ENCODE measurements at regions of chr6 and their contacts with region 1.

Region 1: DNA sequence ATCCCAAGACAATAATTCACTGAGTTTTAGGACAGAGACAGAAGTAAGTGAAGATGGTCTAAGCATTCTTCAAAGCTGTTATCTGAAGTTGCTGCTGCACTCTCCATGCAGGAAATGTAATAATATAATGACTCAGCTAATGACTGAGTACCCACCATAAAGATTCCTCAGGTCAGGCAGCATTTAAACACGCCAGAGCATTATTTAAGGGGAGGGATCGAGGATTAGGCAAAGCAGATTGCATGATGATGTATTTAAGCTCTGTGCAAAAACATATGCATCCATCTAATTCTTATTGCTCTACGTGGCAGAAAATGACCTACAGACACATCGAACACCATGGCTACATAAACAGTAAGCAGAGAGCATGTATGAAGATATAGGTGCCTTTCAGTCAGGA is 216.4 kb downstream of the UNC5CL start:
- DNase-seq: no peak
- H3K4me3 ChIP-seq: no peak overlapping the region
- H3K27ac ChIP-seq: no peak overlapping the region
- H3K4me1 ChIP-seq: no peaks in the 10 kb centered on the region
- H3K27me3 ChIP-seq: peaks cover 0 to 3% of the 10 kb centered on the region in 2 experiments
- CTCF ChIP-seq: no peak
- POLR2A ChIP-seq: no peak

Region 2: GRCh38 chr6:40328405-40328987 is 494.1 kb before region 1 on chr6:
- CTCF ChIA-PET with region 1: no interaction called
- POLR2A ChIA-PET with region 1: no interaction called
- dilution Hi-C with region 1: no loop called
- intact Hi-C with region 1: loop called (anchors 10 kb)
- DNase-seq: no peak
- H3K4me3 ChIP-seq: no peak overlapping the region
- H3K27ac ChIP-seq: no peak overlapping the region
- H3K4me1 ChIP-seq: no peaks in the 10 kb centered on the region
- H3K27me3 ChIP-seq: no peaks in the 10 kb centered on the region
- CTCF ChIP-seq: peak; percentile 11 to 32
- POLR2A ChIP-seq: no peak

Region 3: GRCh38 chr6:40930555-40930954 is 107.9 kb after region 1 on chr6:
- CTCF ChIA-PET with region 1: no interaction called
- POLR2A ChIA-PET with region 1: no interaction called
- dilution Hi-C with region 1: no loop called
- intact Hi-C with region 1: no loop called
- DNase-seq: no peak
- H3K4me3 ChIP-seq: no peak overlapping the region
- H3K27ac ChIP-seq: no peak overlapping the region
- H3K4me1 ChIP-seq: peaks cover 2% of the 10 kb centered on the region
- H3K27me3 ChIP-seq: no peaks in the 10 kb centered on the region
- CTCF ChIP-seq: no peak
- POLR2A ChIP-seq: no peak

Region 4: GRCh38 chr6:40999569-40999968 is 176.9 kb after region 1 on chr6:
- CTCF ChIA-PET with region 1: no interaction called
- POLR2A ChIA-PET with region 1: no interaction called
- dilution Hi-C with region 1: no loop called
- intact Hi-C with region 1: no loop called
- DNase-seq: peak; percentile 44
- H3K4me3 ChIP-seq: no peak overlapping the region
- H3K27ac ChIP-seq: no peak overlapping the region
- H3K4me1 ChIP-seq: peaks cover 24% of the 10 kb centered on the region
- H3K27me3 ChIP-seq: peaks cover 0 to 5% of the 10 kb centered on the region in 2 experiments
- CTCF ChIP-seq: peak; percentile 34 to 55
- POLR2A ChIP-seq: no peak

Measured in endothelial cell of umbilical vein (primary cell).